ENCODE measurements at regions of chr3 and their contacts with region 1.

Region 1: GRCh38 chr3:167012687-167013086 is 367.4 kb downstream of the ZBBX start:
- H3K4me3 ChIP-seq: no peak overlapping the region
- H3K27ac ChIP-seq: no peak overlapping the region
- H3K4me1 ChIP-seq: no peaks in the 10 kb centered on the region
- CTCF ChIP-seq: no peak

Region 2: DNA sequence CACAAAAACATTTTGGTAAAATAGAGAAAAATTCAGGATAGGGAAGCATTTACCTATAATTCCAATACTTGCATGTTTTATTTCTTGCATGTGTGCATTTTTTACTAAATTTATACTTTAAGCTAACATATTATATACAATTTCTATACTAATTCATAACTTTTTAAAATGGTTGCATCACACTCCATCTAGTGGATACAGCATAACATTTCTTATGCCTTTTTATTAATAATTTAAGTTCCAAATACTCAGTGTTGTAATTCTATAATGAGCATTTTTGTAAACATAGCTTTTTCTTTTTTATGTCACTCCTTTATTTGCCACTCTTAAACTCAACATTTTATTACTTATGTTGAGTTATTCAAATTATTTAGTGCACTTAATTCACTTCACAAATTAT is 110.3 kb before region 1 on chr3:
- CTCF ChIA-PET with region 1: interaction called, 11 read pairs
- POLR2A ChIA-PET with region 1: no interaction called
- H3K4me3 ChIP-seq: no peak overlapping the region
- H3K27ac ChIP-seq: no peak overlapping the region
- H3K4me1 ChIP-seq: no peaks in the 10 kb centered on the region
- CTCF ChIP-seq: no peak

Measured in HEK293 (cell line).